ENCODE measurements at regions of chr12 and their contacts with region 1.

Region 1: GRCh38 chr12:6708960-6709394 is 8.4 kb upstream of the PIANP start:
- DNase-seq: no peak
- H3K4me3 ChIP-seq: no peak overlapping the region
- H3K27ac ChIP-seq: no peak overlapping the region
- H3K4me1 ChIP-seq: no peaks in the 10 kb centered on the region
- H3K27me3 ChIP-seq: peaks cover 9% of the 10 kb centered on the region
- CTCF ChIP-seq: no peak

Region 2: GRCh38 chr12:6632026-6632983 is 76.7 kb before region 1 on chr12:
- CTCF ChIA-PET with region 1: interaction called, 11 read pairs
- POLR2A ChIA-PET with region 1: no interaction called
- intact Hi-C with region 1: no loop called
- DNase-seq: peak in 1 of 2 experiments; percentile 17
- H3K4me3 ChIP-seq: no peak overlapping the region
- H3K27ac ChIP-seq: no peak overlapping the region
- H3K4me1 ChIP-seq: peaks cover 22% of the 10 kb centered on the region
- H3K27me3 ChIP-seq: no peaks in the 10 kb centered on the region
- CTCF ChIP-seq: no peak